Activated B cell treated with CpG ODN at 0.5 μM for 24 hours (primary cell): ENCODE measurements at regions of chr14 and their contacts with region 1.

Region 1: GRCh38 chr14:21269252-21270046 is at the start of gene HNRNPC:
- DNase-seq: peak; percentile 100
- ATAC-seq: peak; percentile 87
- H3K4me3 Mint-ChIP-seq: peak within 1 kb of the TSS; percentile 100
- H3K27ac Mint-ChIP-seq: peak within 1 kb of the TSS; percentile 100
- H3K4me1 Mint-ChIP-seq: peaks cover 48% of the 10 kb centered on the region
- H3K27me3 Mint-ChIP-seq: no peaks in the 10 kb centered on the region
- CTCF ChIP-seq: no peak
- total RNA-seq, gene HNRNPC: 653 and 683 TPM in 2 replicates

Region 2: DNA sequence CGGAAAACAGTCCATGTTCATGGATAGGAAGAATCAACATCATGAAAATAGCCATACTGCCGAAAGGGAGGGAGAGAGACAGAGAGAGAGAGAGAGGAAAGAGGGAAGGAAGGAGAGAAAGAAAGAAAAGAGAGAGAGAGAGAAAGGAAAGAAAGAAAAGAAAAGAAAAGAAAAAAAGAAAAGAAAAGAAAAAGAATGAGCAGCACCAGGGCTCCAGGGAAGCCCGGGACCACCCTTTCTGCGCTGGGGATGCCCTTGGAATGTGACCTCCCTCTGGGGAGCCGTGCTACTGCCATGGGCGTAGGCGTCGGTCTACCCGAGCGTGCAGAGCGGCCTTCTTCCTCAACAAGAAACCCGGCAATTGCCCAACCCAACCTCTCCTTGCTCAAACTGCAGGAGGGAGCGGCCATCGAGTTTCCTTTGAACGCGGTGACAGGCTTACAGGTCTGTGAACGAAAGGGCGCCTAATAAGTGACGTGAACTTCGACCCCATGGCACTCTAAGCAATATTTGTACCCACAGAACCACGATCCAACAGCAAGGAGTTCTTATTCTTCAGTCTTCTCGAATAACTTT is 644.9 kb before region 1 on chr14:
- CTCF ChIA-PET with region 1: no interaction called
- POLR2A ChIA-PET with region 1: no interaction called
- intact Hi-C with region 1: loop called (anchors 10 kb)
- DNase-seq: no peak
- ATAC-seq: peak; percentile 69
- H3K4me3 Mint-ChIP-seq: peak overlapping the region; percentile 79
- H3K27ac Mint-ChIP-seq: peak overlapping the region; percentile 89
- H3K4me1 Mint-ChIP-seq: peaks cover 70% of the 10 kb centered on the region
- H3K27me3 Mint-ChIP-seq: peaks cover 11% of the 10 kb centered on the region
- CTCF ChIP-seq: no peak

Region 3: GRCh38 chr14:21287168-21287567 is 17.7 kb after region 1 on chr14:
- CTCF ChIA-PET with region 1: no interaction called
- POLR2A ChIA-PET with region 1: interaction called, 10 read pairs
- intact Hi-C with region 1: no loop called
- DNase-seq: no peak
- ATAC-seq: no peak
- H3K4me3 Mint-ChIP-seq: no peak overlapping the region
- H3K27ac Mint-ChIP-seq: no peak overlapping the region
- H3K4me1 Mint-ChIP-seq: peaks cover 3% of the 10 kb centered on the region
- H3K27me3 Mint-ChIP-seq: no peaks in the 10 kb centered on the region
- CTCF ChIP-seq: no peak

Region 4: DNA sequence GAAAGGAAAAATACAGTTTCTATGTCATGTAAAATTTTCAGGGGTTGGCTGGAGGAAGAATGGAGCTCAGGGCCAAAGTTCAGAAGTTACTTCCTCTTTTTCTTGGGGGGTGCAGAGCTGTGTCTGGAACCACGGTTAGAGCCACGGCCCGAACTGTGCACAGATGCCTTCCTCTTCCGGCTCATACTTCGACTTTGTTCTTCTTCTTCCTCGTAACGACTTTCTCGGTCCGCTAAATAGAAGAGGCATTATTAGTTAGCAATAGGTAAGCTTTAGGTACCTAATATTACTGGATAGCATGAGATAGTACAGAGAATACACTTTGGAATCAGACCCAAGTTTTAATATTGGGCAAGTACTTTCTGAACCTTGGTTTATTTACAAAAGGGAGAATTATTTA is 83.1 kb after region 1 on chr14:
- CTCF ChIA-PET with region 1: no interaction called
- POLR2A ChIA-PET with region 1: interaction called, 3 read pairs
- intact Hi-C with region 1: loop called (anchors 1 kb)
- DNase-seq: no peak
- ATAC-seq: peak; percentile 94
- H3K4me3 Mint-ChIP-seq: peak overlapping the region; percentile 61
- H3K27ac Mint-ChIP-seq: peak overlapping the region; percentile 87
- H3K4me1 Mint-ChIP-seq: peaks cover 17% of the 10 kb centered on the region
- H3K27me3 Mint-ChIP-seq: no peaks in the 10 kb centered on the region
- CTCF ChIP-seq: no peak

Region 5: DNA sequence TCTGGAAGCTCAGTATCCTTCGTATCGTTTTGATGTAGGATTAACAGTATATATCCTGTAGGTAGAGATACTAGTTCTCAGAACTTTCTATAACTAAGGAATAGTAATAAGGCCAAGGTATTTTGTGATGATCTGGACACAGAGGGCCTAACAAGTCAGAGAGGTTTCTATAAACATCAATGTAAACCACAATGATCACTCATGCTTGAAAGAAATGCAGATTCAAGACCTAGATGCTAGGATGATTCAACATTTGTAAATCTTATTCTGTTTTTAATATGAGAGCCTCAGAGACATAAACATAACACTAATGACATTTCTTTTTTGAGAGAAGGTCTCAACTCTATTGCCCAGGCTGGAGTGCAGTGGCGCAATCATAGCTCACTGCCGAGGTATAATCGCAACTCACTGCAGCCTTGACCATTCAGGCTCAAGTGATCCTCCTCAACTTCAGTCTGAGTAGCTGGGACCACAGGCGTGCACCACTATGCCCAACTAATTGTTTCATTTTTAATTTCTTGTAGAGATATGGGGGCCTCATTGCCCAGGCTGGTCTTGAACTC is 98.2 kb after region 1 on chr14:
- CTCF ChIA-PET with region 1: no interaction called
- POLR2A ChIA-PET with region 1: no interaction called
- intact Hi-C with region 1: no loop called
- DNase-seq: no peak
- ATAC-seq: no peak
- H3K4me3 Mint-ChIP-seq: no peak overlapping the region
- H3K27ac Mint-ChIP-seq: no peak overlapping the region
- H3K4me1 Mint-ChIP-seq: peaks cover 3% of the 10 kb centered on the region
- H3K27me3 Mint-ChIP-seq: no peaks in the 10 kb centered on the region
- CTCF ChIP-seq: no peak

Region 6: DNA sequence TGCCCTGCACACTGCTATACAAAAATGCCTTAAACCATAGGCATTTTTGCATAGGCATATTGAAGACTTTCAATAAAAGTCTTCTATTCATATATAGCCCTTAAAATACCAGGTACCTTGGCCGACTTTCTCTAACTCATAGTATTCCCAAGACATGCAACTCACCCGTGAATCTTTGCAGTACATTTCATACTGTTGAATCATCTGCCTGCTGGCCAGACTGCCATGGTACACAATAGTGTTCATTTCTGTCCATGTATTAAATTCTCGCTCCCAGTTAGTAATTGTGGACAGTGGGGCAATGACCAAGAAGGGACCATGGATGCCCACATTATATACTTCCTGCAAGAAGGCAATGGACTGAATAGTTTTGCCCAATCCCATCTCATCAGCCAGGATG is 138.7 kb after region 1 on chr14:
- CTCF ChIA-PET with region 1: no interaction called
- POLR2A ChIA-PET with region 1: interaction called, 13 read pairs
- intact Hi-C with region 1: no loop called
- DNase-seq: no peak
- ATAC-seq: no peak
- H3K4me3 Mint-ChIP-seq: no peak overlapping the region
- H3K27ac Mint-ChIP-seq: no peak overlapping the region
- H3K4me1 Mint-ChIP-seq: no peaks in the 10 kb centered on the region
- H3K27me3 Mint-ChIP-seq: no peaks in the 10 kb centered on the region
- CTCF ChIP-seq: no peak

Region 7: DNA sequence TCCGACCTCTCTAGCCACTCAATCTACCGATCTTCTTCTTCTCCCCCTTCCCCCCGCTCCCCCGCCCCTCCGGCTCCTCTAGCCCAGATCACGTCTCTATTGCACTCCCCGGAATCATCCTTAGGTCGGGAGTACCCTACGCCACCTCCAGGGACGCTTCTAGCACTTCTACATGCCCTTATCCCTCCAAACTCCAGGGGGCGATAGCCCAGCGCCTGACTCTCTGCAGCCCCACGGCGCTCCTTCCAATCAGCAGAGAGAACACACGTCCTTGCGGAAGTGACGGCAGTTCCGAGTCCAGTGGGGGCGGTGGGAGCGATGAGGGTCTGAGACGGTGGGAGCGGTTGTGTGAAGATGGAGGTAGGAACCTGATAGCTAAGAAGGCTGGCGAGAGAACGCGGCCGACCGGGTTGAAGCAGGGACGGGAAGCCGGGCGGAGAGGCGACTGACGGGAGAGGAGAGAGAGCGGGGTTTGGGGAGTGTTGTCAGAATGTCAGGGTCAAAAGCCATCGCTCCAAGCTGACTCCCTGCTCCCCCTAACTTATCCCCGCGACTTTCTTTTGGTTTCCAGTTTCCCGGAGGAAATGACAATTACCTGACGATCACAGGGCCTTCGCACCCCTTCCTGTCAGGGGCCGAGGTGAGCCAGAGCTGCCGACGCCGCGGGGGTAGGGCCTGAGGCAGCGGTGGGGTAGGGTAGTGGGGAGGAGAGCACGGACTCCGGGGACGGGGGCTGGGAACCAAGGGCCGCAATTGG is 207.7 kb after region 1 on chr14 and contains the starts of genes RAB2B and TOX4:
- CTCF ChIA-PET with region 1: no interaction called
- POLR2A ChIA-PET with region 1: interaction called, 7 read pairs
- intact Hi-C with region 1: loop called (anchors 1 kb)
- DNase-seq: peak; percentile 84
- ATAC-seq: peak; percentile 96
- H3K4me3 Mint-ChIP-seq: peak within 1 kb of the TSS; percentile 99
- H3K27ac Mint-ChIP-seq: peak within 1 kb of the TSS; percentile 95
- H3K4me1 Mint-ChIP-seq: peaks cover 37% of the 10 kb centered on the region
- H3K27me3 Mint-ChIP-seq: no peaks in the 10 kb centered on the region
- CTCF ChIP-seq: no peak
- total RNA-seq, gene RAB2B: 25.0 and 27.5 TPM in 2 replicates
- total RNA-seq, gene TOX4: 77.2 and 81.4 TPM in 2 replicates